Activated T-helper 2 cell treated with anti-CD3 and anti-CD28 coated beads, Interferon-gamma antibody, Interleukin-2, Interleukin-4, amounts not matched to agents 10 μg/mL and 5 μg/mL and 100 μg/mL, durations not matched to agents 14 hours and 24 hours and 36 hours (primary cell): ENCODE measurements at regions of chr9 and their contacts with region 1.

Region 1: GRCh38 chr9:78031893-78032729 is 500 bp upstream of the GNAQ start:
- DNase-seq: peak; percentile 75
- H3K4me3 Mint-ChIP-seq: peak overlapping the region; percentile 92
- H3K27ac Mint-ChIP-seq: peak overlapping the region; percentile 94
- H3K4me1 Mint-ChIP-seq: peaks cover 54% of the 10 kb centered on the region
- H3K27me3 Mint-ChIP-seq: peaks cover 5% of the 10 kb centered on the region

Region 2: DNA sequence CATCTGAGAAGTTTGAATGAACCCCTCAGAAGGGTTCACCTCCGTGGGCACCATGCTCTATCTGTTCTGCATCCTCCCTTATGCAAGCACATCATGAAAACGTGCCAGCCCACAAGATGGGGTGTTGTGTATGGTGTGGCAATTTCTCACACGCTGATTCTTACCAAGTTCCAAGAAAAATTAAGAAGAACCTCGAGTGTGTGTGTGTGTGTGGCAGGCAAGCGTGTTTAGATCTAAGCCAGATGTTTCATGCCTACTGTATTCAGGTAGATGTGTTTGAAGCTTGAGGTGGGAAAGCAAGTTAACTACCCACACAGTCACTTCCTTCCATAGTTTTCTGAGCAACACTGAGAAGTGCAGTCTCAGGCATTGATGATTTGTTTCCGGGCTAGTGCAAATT is 306.3 kb before region 1 on chr9:
- intact Hi-C with region 1: loop called (anchors 5 kb)
- DNase-seq: no peak
- H3K4me3 Mint-ChIP-seq: peak overlapping the region; percentile 5
- H3K27ac Mint-ChIP-seq: peak overlapping the region; percentile 71
- H3K4me1 Mint-ChIP-seq: peaks cover 33% of the 10 kb centered on the region
- H3K27me3 Mint-ChIP-seq: no peaks in the 10 kb centered on the region

Region 3: GRCh38 chr9:77909306-77909705 is 122.8 kb before region 1 on chr9:
- intact Hi-C with region 1: loop called (anchors 5 kb)
- DNase-seq: peak; percentile 41
- H3K4me3 Mint-ChIP-seq: peak overlapping the region; percentile 61
- H3K27ac Mint-ChIP-seq: peak overlapping the region; percentile 95
- H3K4me1 Mint-ChIP-seq: peaks cover 80% of the 10 kb centered on the region
- H3K27me3 Mint-ChIP-seq: no peaks in the 10 kb centered on the region

Region 4: GRCh38 chr9:78103971-78104433 is 71.9 kb after region 1 on chr9:
- intact Hi-C with region 1: loop called (anchors 2 kb)
- DNase-seq: peak; percentile 54
- H3K4me3 Mint-ChIP-seq: peak overlapping the region; percentile 22
- H3K27ac Mint-ChIP-seq: no peak overlapping the region
- H3K4me1 Mint-ChIP-seq: peaks cover 49% of the 10 kb centered on the region
- H3K27me3 Mint-ChIP-seq: no peaks in the 10 kb centered on the region

Region 5: DNA sequence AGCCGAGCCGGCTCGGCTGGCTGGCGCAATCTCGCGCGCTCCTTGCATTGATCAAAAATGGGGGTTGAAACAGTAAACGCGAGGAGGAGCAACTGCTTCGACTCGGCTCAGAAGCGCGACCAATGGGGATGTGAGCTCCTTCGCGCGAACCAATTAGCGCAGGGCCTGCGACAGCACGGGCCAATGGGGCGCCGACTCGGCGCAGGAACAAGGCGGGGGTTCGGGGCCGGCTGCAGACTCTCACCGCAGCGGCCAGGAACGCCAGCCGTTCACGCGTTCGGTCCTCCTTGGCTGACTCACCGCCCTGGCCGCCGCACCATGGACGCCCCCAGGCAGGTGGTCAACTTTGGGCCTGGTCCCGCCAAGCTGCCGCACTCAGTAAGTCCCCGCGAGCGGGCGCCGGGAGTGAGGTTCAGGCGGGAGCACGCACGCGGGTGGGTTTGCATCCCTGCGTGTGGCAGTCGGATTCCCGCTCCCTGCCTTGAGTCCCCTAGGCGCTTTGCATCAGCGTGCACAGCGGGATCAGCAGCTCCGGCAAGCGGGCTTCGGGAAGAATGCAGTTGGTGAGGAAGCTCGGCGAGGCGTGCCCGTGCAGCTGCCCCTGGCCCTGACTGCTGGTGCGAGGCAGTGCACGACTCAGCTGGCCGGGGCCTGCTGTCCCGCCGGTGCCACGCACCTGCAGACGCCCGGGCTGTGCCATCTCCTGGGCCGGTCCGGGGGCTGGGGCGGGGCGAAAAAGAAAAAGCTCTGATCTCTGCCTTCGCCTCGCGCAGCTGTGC is 265.0 kb after region 1 on chr9 and contains the start of gene PSAT1:
- intact Hi-C with region 1: loop called (anchors 5 kb)
- DNase-seq: peak; percentile 92
- H3K4me3 Mint-ChIP-seq: peak within 1 kb of the TSS; percentile 92
- H3K27ac Mint-ChIP-seq: peak within 1 kb of the TSS; percentile 93
- H3K4me1 Mint-ChIP-seq: peaks cover 40% of the 10 kb centered on the region
- H3K27me3 Mint-ChIP-seq: no peaks in the 10 kb centered on the region
- total RNA-seq, gene PSAT1: 66.5 and 67.6 TPM in 2 replicates